CD8-positive, alpha-beta T cell (primary cell): ENCODE measurements at regions of chr11 and their contacts with region 1.

Region 1: GRCh38 chr11:2532704-2533586 is 88.1 kb downstream of the KCNQ1 start:
- DNase-seq: peak; percentile 85 to 97 (median 92)
- ATAC-seq: peak; percentile 86
- H3K4me3 ChIP-seq: peak overlapping the region; percentile 18 to 28
- H3K4me3 Mint-ChIP-seq: peak overlapping the region; percentile 76
- H3K27ac ChIP-seq: no peak overlapping the region
- H3K27ac Mint-ChIP-seq: no peak overlapping the region
- H3K4me1 ChIP-seq: peaks cover 19% of the 10 kb centered on the region
- H3K4me1 Mint-ChIP-seq: peaks cover 20% of the 10 kb centered on the region
- H3K27me3 ChIP-seq: no peaks in the 10 kb centered on the region
- H3K27me3 Mint-ChIP-seq: no peaks in the 10 kb centered on the region
- CTCF ChIP-seq: peak; percentile 94

Region 2: GRCh38 chr11:2298795-2299761 is 233.9 kb before region 1 on chr11:
- CTCF ChIA-PET with region 1: interaction called, 33 read pairs
- POLR2A ChIA-PET with region 1: no interaction called
- intact Hi-C with region 1: loop called (anchors 2 to 5 kb)
- DNase-seq: peak in 6 of 9 experiments; percentile 45 to 75 (median 66)
- ATAC-seq: peak; percentile 51
- H3K4me3 ChIP-seq: peak overlapping the region; percentile 43 to 85
- H3K4me3 Mint-ChIP-seq: peak overlapping the region; percentile 90
- H3K27ac ChIP-seq: peak overlapping the region; percentile 80 to 81
- H3K27ac Mint-ChIP-seq: peak overlapping the region; percentile 92
- H3K4me1 ChIP-seq: peaks cover 47% of the 10 kb centered on the region
- H3K4me1 Mint-ChIP-seq: peaks cover 64% of the 10 kb centered on the region
- H3K27me3 ChIP-seq: no peaks in the 10 kb centered on the region
- H3K27me3 Mint-ChIP-seq: no peaks in the 10 kb centered on the region
- CTCF ChIP-seq: no peak

Region 3: GRCh38 chr11:2437176-2437915 is 95.6 kb before region 1 on chr11:
- CTCF ChIA-PET with region 1: interaction called, 32 read pairs
- POLR2A ChIA-PET with region 1: no interaction called
- intact Hi-C with region 1: no loop called
- DNase-seq: no peak
- ATAC-seq: no peak
- H3K4me3 ChIP-seq: no peak overlapping the region
- H3K4me3 Mint-ChIP-seq: no peak overlapping the region
- H3K27ac ChIP-seq: no peak overlapping the region
- H3K27ac Mint-ChIP-seq: no peak overlapping the region
- H3K4me1 ChIP-seq: peaks cover 3% of the 10 kb centered on the region
- H3K4me1 Mint-ChIP-seq: peaks cover 6% of the 10 kb centered on the region
- H3K27me3 ChIP-seq: no peaks in the 10 kb centered on the region
- H3K27me3 Mint-ChIP-seq: no peaks in the 10 kb centered on the region
- CTCF ChIP-seq: no peak

Region 4: GRCh38 chr11:2510626-2511402 is 22.1 kb before region 1 on chr11:
- CTCF ChIA-PET with region 1: interaction called, 19 read pairs
- POLR2A ChIA-PET with region 1: no interaction called
- intact Hi-C with region 1: no loop called
- DNase-seq: peak in 1 of 9 experiments; percentile 3
- ATAC-seq: no peak
- H3K4me3 ChIP-seq: no peak overlapping the region
- H3K4me3 Mint-ChIP-seq: no peak overlapping the region
- H3K27ac ChIP-seq: no peak overlapping the region
- H3K27ac Mint-ChIP-seq: no peak overlapping the region
- H3K4me1 ChIP-seq: no peaks in the 10 kb centered on the region
- H3K4me1 Mint-ChIP-seq: peaks cover 9% of the 10 kb centered on the region
- H3K27me3 ChIP-seq: no peaks in the 10 kb centered on the region
- H3K27me3 Mint-ChIP-seq: no peaks in the 10 kb centered on the region
- CTCF ChIP-seq: no peak

Region 5: GRCh38 chr11:2691991-2692875 is 159.3 kb after region 1 on chr11:
- CTCF ChIA-PET with region 1: no interaction called
- POLR2A ChIA-PET with region 1: no interaction called
- intact Hi-C with region 1: no loop called
- DNase-seq: no peak
- ATAC-seq: no peak
- H3K4me3 ChIP-seq: no peak overlapping the region
- H3K4me3 Mint-ChIP-seq: no peak overlapping the region
- H3K27ac ChIP-seq: no peak overlapping the region
- H3K27ac Mint-ChIP-seq: no peak overlapping the region
- H3K4me1 ChIP-seq: no peaks in the 10 kb centered on the region
- H3K4me1 Mint-ChIP-seq: no peaks in the 10 kb centered on the region
- H3K27me3 ChIP-seq: no peaks in the 10 kb centered on the region
- H3K27me3 Mint-ChIP-seq: no peaks in the 10 kb centered on the region
- CTCF ChIP-seq: no peak

Region 6: GRCh38 chr11:2892215-2893020 is 359.5 kb after region 1 on chr11:
- CTCF ChIA-PET with region 1: interaction called, 492 read pairs
- POLR2A ChIA-PET with region 1: interaction called, 31 read pairs
- intact Hi-C with region 1: loop called (anchors 1 kb)
- DNase-seq: peak in 8 of 9 experiments; percentile 40 to 80 (median 60)
- ATAC-seq: peak; percentile 65
- H3K4me3 ChIP-seq: peak overlapping the region; percentile 48 to 51
- H3K4me3 Mint-ChIP-seq: peak overlapping the region; percentile 68
- H3K27ac ChIP-seq: peak overlapping the region; percentile 31 to 71
- H3K27ac Mint-ChIP-seq: peak overlapping the region; percentile 88
- H3K4me1 ChIP-seq: peaks cover 35% of the 10 kb centered on the region
- H3K4me1 Mint-ChIP-seq: peaks cover 25% of the 10 kb centered on the region
- H3K27me3 ChIP-seq: no peaks in the 10 kb centered on the region
- H3K27me3 Mint-ChIP-seq: no peaks in the 10 kb centered on the region
- CTCF ChIP-seq: peak; percentile 88

Region 7: DNA sequence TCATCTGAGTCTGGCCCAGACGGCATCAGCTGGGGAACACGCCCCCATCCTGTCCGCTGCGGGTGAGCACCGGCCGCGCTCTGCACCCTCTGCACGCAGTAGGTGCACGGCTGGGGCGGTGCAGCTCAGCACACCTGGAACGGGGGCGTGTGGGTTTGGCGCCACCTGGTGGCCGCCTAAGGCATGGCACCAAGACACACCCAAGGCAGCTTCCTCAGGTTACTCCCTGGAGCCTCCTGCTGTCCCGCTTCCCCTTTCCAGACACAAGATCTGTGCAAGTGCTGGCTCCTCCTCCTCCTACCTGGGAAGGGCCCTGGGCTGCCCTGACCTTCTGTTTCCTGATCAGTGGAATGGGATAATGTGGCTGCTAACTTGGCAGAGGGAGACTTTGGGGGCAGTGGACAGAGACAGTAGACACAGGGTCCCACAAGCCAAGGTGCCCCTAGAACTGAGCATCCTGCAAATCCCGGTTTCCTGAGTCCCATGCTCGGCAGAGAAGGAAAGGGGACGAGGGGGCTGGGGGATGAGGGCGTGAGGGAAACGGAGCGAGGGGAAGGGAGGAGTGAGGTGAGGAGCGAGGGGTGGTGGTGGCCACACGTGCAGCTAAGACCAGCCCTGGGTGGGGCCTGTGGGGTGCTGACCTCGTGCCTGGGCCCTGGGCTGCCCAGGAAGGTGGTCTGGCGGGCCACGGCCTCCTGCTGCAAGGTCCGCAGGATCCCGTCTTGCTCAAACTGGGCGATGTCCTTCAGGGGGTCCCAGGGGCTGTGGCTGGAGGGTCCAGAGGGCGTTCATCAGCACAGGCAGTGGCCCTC is 559.1 kb after region 1 on chr11:
- CTCF ChIA-PET with region 1: interaction called, 102 read pairs
- POLR2A ChIA-PET with region 1: interaction called, 5 read pairs
- intact Hi-C with region 1: loop called (anchors 1 kb)
- DNase-seq: peak; percentile 50 to 86 (median 67)
- ATAC-seq: peak; percentile 97
- H3K4me3 ChIP-seq: no peak overlapping the region
- H3K4me3 Mint-ChIP-seq: no peak overlapping the region
- H3K27ac ChIP-seq: no peak overlapping the region
- H3K27ac Mint-ChIP-seq: no peak overlapping the region
- H3K4me1 ChIP-seq: no peaks in the 10 kb centered on the region
- H3K4me1 Mint-ChIP-seq: no peaks in the 10 kb centered on the region
- H3K27me3 ChIP-seq: no peaks in the 10 kb centered on the region
- H3K27me3 Mint-ChIP-seq: no peaks in the 10 kb centered on the region
- CTCF ChIP-seq: peak; percentile 90

Region 8: GRCh38 chr11:3222941-3223915 is 690.3 kb after region 1 on chr11:
- CTCF ChIA-PET with region 1: no interaction called
- POLR2A ChIA-PET with region 1: no interaction called
- intact Hi-C with region 1: no loop called
- DNase-seq: peak in 2 of 9 experiments; percentile 22 to 48
- ATAC-seq: no peak
- H3K4me3 ChIP-seq: no peak overlapping the region
- H3K4me3 Mint-ChIP-seq: no peak overlapping the region
- H3K27ac ChIP-seq: no peak overlapping the region
- H3K27ac Mint-ChIP-seq: no peak overlapping the region
- H3K4me1 ChIP-seq: peaks cover 10% of the 10 kb centered on the region
- H3K4me1 Mint-ChIP-seq: peaks cover 5% of the 10 kb centered on the region
- H3K27me3 ChIP-seq: no peaks in the 10 kb centered on the region
- H3K27me3 Mint-ChIP-seq: peaks cover 18% of the 10 kb centered on the region
- CTCF ChIP-seq: no peak